Heart left ventricle (tissue), 16 donors: ENCODE measurements at regions of chr20 and their contacts with region 1.

Region 1: DNA sequence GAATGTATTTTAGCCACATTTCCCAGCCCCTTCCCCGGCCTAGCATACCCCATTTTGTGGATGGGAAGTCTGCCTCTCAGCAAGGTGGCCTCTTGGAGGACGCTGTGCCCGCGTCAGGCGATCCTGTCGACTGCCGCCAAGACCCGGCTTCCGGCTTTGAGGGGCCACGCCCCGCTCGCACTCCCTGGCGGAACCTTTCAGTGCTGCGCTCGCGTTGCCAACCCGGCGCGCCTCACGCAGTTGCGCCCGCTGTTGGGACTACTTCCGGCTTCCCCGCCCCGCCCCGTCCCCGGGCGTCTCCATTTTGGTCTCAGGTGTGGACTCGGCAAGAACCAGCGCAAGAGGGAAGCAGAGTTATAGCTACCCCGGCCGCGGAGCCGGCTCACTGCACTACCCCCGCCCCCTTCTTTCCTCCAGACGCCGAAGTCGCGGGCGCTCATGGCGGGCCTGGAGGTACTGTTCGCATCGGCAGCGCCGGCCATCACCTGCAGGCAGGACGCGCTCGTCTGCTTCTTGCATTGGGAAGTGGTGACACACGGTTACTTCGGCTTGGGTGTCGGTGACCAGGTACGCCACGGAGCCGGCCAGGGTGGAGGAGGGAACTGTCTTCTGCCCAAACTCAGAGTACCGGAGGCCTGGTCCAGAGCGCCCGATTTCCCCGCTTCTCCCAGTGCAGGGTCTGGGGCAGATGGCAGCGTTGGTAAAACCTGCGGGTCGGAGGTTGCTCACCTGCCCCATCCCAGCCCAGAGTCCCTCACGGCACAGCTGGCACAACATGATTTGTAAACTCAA is at the start of gene PSMF1:
- DNase-seq: peak; percentile 94 to 97 (median 96)
- ATAC-seq: peak; percentile 97 to 99 (median 99)
- H3K4me3 ChIP-seq: peak within 1 kb of the TSS; percentile 68 to 100 (median 95)
- H3K27ac ChIP-seq: peak within 1 kb of the TSS; percentile 9 to 92 (median 80)
- H3K4me1 ChIP-seq: peaks cover 16 to 55% (median 50%) of the 10 kb centered on the region in 12 donors
- H3K27me3 ChIP-seq: no peaks in the 10 kb centered on the region
- CTCF ChIP-seq: peak in 5 of 12 donors; percentile 19 to 30 (median 23)
- POLR2A ChIP-seq: peak in 1 of 2 donors; percentile 43
- total RNA-seq, gene PSMF1: 116 to 184 (median 141) TPM

Region 2: GRCh38 chr20:833450-834150 is 284.9 kb before region 1 on chr20 and contains the start of gene FAM110A:
- intact Hi-C with region 1: loop called in 1 of 10 experiments (anchors 5 kb)
- DNase-seq: peak; percentile 97 to 98 (median 98)
- ATAC-seq: peak; percentile 94 to 98 (median 97)
- H3K4me3 ChIP-seq: peak within 1 kb of the TSS; percentile 69 to 97 (median 81)
- H3K27ac ChIP-seq: peak within 1 kb of the TSS; percentile 49 to 96 (median 84)
- H3K4me1 ChIP-seq: peaks cover 0 to 49% (median 22%) of the 10 kb centered on the region in 12 donors
- H3K27me3 ChIP-seq: no peaks in the 10 kb centered on the region
- CTCF ChIP-seq: no peak
- POLR2A ChIP-seq: no peak
- total RNA-seq, gene FAM110A: 1.2 to 8.1 (median 2.3) TPM

Region 3: GRCh38 chr20:1103751-1104150 is 14.8 kb before region 1 on chr20:
- intact Hi-C with region 1: no loop called
- DNase-seq: no peak
- ATAC-seq: no peak
- H3K4me3 ChIP-seq: no peak overlapping the region
- H3K27ac ChIP-seq: no peak overlapping the region
- H3K4me1 ChIP-seq: peaks cover 0 to 4% (median 0%) of the 10 kb centered on the region in 12 donors
- H3K27me3 ChIP-seq: no peaks in the 10 kb centered on the region
- CTCF ChIP-seq: no peak
- POLR2A ChIP-seq: no peak

Region 4: DNA sequence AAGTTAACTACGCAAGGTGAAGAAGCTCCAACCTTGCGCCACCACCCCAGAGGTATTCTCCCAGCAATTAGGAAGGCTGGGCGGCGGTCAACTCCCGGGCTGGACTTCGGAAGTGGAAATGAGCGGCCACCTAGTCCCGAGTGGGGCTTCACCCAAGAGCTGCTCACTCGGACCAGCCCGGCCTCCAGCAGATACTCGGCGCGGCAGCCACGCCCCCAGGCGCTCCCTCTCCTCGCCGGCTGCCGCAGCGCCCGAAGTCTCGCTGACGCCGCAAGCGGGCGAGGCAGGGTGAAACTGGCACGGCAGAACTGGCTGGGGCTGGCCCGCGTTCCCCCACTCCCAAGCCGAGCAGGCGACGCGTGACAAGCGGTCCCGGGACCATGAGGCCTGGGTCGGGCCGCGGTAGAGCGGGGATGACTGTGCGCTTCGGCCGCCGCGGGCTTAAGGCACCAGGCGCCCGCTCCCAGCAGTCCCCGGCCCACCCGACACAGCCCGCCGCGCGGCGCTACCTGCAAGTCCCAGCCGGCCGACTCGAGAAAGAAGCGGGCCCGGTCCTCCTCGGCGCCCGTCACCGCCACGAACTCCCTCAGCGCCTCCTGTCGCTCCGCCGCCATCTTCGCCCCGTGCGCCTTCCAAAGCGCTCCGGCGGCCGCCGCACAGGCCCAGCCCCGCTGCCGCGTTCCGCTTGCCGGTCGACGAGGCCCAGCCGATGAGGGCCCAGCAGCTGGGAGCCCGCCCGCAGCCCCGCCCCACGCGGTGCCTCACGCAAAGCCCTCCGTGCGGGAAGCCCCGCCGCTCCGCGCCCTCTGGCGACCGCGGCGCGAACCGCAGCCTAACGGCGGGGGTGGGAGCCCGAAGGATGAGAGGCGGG is 347.9 kb after region 1 on chr20 and contains the start of gene NSFL1C:
- intact Hi-C with region 1: loop called in 4 of 10 experiments (anchors 2 to 10 kb)
- DNase-seq: peak; percentile 95 to 97 (median 97)
- ATAC-seq: peak; percentile 90 to 98 (median 96)
- H3K4me3 ChIP-seq: peak within 1 kb of the TSS; percentile 73 to 99 (median 92)
- H3K27ac ChIP-seq: peak within 1 kb of the TSS; percentile 80 to 96 (median 89)
- H3K4me1 ChIP-seq: peaks cover 5 to 69% (median 28%) of the 10 kb centered on the region in 12 donors
- H3K27me3 ChIP-seq: no peaks in the 10 kb centered on the region
- CTCF ChIP-seq: peak in 11 of 12 donors; percentile 88 to 100 (median 98)
- POLR2A ChIP-seq: peak in 1 of 2 donors; percentile 65
- total RNA-seq, gene NSFL1C: 27.9 to 66.6 (median 62.1) TPM

Region 5: DNA sequence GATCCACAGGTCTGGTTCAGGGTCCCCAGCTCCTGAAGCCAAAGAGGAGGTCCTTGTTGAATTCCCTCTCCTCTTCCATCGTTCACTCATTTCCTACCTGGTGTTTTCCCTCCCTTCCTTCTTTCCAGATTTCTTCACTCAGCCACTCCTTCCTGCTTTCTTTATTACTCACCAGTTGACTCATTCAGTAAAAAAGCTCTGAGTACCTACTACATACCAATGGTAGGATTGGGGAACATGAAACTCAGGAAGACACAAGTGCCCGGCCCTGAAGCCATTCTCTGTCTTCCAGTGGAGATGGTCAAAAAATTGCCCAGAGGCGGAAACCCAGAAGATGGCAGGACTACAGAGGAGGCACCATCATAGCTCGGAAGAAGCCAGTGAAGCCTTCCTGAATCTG is 360.0 kb after region 1 on chr20:
- intact Hi-C with region 1: no loop called
- DNase-seq: no peak
- ATAC-seq: no peak
- H3K4me3 ChIP-seq: no peak overlapping the region
- H3K27ac ChIP-seq: no peak overlapping the region
- H3K4me1 ChIP-seq: peaks cover 0 to 4% (median 0%) of the 10 kb centered on the region in 12 donors
- H3K27me3 ChIP-seq: no peaks in the 10 kb centered on the region
- CTCF ChIP-seq: no peak
- POLR2A ChIP-seq: no peak